Posterior vena cava (tissue), 2 donors: ENCODE measurements at regions of chr2 and their contacts with region 1.

Region 1: DNA sequence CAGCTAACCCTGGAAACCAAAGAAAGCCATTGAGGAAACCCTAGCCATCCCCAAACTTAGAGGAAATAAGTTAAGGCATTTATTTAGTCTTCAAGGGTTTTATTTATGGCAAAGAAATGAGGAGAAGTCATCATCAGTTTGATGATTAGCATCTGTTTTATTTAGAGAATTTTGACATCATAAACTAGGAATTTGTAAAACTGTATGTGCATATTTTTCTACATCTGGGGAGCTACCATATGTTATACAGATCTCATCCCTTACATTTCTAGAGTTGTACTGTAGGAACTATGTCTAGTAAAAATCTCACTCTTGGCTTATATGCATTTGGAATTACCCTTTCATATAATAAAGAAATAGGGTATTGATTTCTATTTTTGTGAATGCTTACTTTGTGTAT is 48.7 kb downstream of the FMNL2 start:
- DNase-seq: no peak

Region 2: GRCh38 chr2:152415231-152415642 is 31.5 kb after region 1 on chr2:
- intact Hi-C with region 1: loop called in 1 of 2 experiments (anchors 2 kb)
- DNase-seq: no peak